AG04449 (cell line): ENCODE measurements at regions of chr5 and their contacts with region 1.

Region 1: DNA sequence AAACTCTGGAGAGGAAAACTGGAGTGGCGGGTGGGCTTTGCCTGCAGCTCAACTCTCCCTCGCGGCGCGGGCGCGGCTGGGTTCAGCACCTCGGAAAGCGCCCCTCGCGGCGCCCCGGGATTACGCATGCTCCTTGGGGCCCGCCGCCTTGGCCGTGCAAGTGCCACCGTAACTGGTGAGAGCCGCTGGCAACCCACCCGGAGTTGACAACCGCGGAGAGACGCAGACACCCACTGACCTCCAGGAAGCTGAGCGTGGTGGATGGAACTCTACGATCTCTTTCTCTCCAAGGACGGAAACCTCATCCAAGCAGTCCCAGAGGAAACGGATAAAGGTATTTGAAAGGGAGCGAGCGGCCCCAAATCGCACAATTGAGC is 194 bp upstream of the RXFP3 start:
- DNase-seq: no peak
- H3K4me3 ChIP-seq: peak overlapping the region; percentile 59
- CTCF ChIP-seq: no peak

Region 2: DNA sequence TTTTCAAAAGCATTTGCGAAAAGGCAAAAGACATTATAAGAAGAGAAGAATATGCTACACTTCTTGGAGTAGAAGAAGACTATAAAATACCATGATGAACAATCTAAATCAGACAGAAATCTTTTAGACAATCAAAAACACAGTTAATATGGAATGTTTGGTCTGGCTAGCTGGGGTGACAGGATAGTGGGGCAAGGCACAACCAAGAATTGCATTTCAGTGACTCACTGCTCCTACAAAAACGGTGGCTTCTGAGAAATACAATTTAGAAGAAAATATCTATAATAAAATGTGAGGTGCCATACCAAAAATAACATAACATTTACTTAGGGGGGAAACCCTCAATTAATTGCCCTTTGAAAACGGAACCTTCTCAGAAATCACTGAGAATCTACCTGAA is 861.4 kb before region 1 on chr5:
- CTCF ChIA-PET with region 1: no interaction called
- POLR2A ChIA-PET with region 1: no interaction called
- DNase-seq: no peak
- H3K4me3 ChIP-seq: no peak overlapping the region
- CTCF ChIP-seq: no peak

Region 3: GRCh38 chr5:33479311-33479710 is 456.7 kb before region 1 on chr5:
- CTCF ChIA-PET with region 1: interaction called, 12 read pairs
- POLR2A ChIA-PET with region 1: no interaction called
- DNase-seq: no peak
- H3K4me3 ChIP-seq: no peak overlapping the region
- CTCF ChIP-seq: no peak

Region 4: DNA sequence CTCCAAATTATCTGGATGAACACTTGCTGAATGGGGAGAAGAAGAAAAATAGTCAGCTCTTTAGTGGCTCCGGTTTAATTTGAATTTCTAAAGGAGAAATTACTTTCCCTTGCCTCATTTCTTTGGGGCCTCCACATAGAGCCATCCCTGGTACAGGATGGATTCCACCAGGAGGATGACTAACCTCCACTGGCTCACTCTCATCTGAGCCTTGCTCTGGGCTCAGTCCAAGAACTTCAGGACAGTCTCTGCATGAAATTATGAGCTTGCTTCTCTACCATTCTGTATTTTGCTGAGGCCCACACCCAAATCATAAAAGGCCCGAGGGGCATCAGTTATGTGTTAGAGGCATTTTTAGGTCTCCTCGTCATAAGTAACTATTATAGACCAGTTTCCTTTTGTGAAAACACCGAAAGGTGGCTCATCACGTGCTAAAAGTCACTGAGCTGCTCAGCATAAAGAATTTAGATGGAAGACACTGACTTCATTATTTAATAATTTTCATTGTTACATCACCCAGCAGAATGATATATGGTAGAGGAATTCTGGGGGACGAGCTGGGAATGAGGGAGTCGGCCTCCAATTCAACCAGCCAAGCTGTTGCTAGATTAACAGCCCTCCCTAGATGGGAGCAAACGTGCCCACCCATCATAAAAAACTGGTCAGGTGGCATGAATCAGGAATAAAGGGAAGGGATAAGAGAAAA is 273.1 kb before region 1 on chr5:
- CTCF ChIA-PET with region 1: interaction called, 12 read pairs
- POLR2A ChIA-PET with region 1: no interaction called
- DNase-seq: peak; percentile 44
- H3K4me3 ChIP-seq: no peak overlapping the region
- CTCF ChIP-seq: no peak

Region 5: GRCh38 chr5:33891788-33892619 is 44.0 kb before region 1 on chr5 and contains the start of gene ADAMTS12:
- CTCF ChIA-PET with region 1: interaction called, 21 read pairs
- POLR2A ChIA-PET with region 1: no interaction called
- DNase-seq: no peak
- H3K4me3 ChIP-seq: peak within 1 kb of the TSS; percentile 67
- CTCF ChIP-seq: no peak

Region 6: DNA sequence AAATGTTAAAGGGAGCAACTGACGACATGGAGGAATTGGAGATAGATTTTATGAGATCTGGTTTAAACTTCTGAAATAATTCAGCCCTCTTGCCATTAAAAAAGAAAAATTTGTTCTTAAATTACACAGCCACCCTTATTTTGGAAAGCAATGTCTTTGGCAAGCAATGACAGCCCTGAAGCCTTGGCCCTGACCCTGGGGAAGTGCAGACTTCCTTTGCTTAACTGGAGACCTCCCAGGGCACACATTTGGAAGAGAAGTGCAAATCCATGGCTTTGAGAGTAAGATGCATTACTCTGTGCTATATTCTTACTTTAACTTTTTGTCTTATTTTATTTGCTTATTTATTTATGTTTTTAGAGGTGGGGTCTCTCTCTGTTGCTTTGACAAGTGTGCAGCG is 22.2 kb after region 1 on chr5:
- CTCF ChIA-PET with region 1: interaction called, 21 read pairs
- POLR2A ChIA-PET with region 1: no interaction called
- DNase-seq: no peak
- H3K4me3 ChIP-seq: no peak overlapping the region
- CTCF ChIP-seq: no peak